Activated CD4-positive, alpha-beta T cell treated with anti-CD3 and anti-CD28 coated beads for 36 hours (primary cell): ENCODE measurements at regions of chr16 and their contacts with region 1.

Region 1: DNA sequence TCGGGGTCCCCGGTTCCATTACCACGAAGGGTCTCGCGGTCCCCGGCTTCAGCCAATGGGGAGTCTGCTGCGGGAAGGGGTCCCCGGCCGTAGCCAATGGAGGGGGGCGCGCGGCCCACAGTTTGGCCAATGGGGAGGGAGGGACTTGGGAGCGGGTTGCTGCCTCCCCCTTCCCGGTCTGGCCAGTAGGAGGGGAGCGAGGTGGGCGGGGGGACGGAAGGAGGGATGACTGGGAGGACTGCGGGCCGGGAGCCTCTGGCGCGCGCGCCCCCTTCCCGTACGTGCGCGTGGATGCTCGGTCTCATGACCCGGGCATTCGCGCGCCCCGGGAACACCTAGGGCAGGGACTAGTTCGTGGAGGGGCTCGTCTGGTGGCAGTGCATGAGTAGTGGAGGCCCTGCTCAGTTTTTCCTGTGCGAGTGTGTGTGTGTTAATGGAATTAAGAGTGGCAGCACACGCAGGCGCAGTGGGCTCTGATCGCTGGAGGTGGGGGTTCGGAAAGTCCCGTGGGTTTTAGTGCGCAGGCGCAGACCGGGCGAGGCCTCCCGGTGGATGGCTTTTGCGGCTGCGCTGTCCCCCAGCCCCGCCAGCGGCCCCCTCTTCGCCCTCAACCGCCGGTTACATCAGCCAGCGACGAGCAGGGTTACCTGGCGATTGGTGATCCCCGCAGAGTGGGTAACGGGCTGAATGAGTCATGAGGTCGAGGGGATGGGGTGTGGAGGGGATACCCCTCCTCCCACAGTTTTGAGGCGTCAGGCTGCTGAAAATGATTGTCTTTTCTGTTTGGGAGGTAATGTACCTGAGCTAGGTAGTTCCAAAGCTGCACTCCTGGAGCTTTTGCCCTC is 1.3 kb downstream of the ATXN2L start:
- DNase-seq: peak; percentile 98
- ATAC-seq: peak; percentile 80
- H3K4me3 Mint-ChIP-seq: peak overlapping the region; percentile 96
- H3K27ac Mint-ChIP-seq: peak overlapping the region; percentile 100
- H3K4me1 Mint-ChIP-seq: peaks cover 45% of the 10 kb centered on the region
- H3K27me3 Mint-ChIP-seq: no peaks in the 10 kb centered on the region

Region 2: DNA sequence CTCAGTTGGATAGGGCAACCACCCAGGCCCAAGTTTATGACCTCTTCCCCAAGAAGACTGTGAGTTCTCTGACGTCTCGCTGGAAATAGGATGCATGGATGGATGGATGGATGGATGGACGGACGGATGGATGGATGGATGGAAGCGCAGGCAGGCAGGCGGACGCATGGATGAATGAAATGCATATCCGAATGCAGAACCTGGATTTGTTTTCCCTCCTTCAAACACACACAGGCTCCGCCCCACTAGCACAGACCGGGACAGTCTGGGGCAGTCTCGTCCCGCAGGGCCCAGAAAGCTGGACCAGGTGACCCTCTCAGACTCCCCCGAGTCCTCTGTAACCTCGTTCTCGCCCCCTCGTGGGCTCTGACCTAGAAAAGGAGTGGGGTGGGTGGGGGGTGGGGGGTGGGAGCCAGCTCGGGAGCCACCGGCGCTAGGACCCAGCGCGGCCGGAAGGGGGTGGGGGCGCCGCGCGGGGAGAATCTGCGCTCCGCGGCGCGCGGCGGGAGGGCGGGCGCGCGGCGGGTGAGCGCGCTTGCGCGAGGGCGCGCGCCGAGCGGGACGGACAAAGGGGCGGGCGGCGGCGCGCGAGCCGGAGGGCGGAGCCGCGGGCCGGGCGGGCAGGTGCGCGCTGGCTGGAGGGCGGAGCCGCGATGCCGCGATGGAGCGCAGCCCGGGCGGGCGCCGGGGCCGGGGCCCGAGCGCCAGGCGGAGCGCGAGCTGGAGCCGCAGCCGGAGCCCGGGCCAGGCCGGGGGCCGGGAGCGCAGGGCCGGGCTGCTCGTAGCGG is 532.0 kb before region 1 on chr16 and contains the start of gene SBK1:
- CTCF ChIA-PET with region 1: no interaction called
- POLR2A ChIA-PET with region 1: no interaction called
- intact Hi-C with region 1: loop called in 1 of 2 experiments (anchors 1 kb)
- DNase-seq: peak; percentile 91
- ATAC-seq: peak; percentile 94
- H3K4me3 Mint-ChIP-seq: peak within 1 kb of the TSS; percentile 84
- H3K27ac Mint-ChIP-seq: peak within 1 kb of the TSS; percentile 93
- H3K4me1 Mint-ChIP-seq: peaks cover 51% of the 10 kb centered on the region
- H3K27me3 Mint-ChIP-seq: no peaks in the 10 kb centered on the region
- total RNA-seq, gene SBK1: 6.5 to 6.6 TPM

Region 3: DNA sequence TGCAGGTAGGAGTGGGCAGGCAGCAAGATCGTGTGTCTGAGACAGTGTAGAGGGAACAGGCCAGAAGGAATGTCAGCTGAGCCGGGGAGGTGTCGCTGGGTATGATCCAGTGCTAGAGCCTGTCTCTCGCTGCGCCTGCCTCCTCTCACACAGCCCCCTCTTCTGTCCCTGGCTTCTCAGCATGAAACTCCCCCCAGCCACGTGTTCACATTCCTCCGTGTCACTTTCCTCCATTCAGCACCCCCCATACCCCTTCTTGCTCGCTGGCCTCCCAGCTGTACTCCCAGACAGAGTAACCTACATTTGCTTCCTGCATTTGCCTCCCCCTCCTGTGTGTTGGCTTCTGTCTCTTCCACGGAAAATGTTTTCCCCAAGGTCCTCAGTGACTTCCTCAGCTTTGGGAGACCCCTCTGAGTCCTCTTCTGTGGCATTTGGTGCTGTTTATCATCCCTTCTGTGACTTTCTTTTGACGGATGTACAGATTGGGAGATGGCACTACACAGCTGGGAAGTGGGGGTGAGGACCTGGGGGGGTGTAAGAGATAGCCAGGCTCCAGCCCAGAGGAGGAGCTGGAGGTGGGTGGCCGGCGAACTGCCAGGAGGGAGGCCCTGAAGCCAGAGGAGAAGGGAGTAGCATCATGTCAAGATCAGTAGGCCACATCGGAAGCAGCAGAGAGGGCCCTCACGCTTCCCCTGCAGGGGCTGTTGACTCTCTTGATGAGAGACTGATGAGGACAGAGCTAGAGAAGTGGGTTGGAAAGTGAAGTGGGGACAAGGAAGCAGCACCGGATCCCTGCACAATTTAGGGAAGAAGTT is 251.2 kb before region 1 on chr16:
- CTCF ChIA-PET with region 1: no interaction called
- POLR2A ChIA-PET with region 1: no interaction called
- intact Hi-C with region 1: no loop called
- DNase-seq: no peak
- ATAC-seq: no peak
- H3K4me3 Mint-ChIP-seq: no peak overlapping the region
- H3K27ac Mint-ChIP-seq: peak overlapping the region; percentile 8
- H3K4me1 Mint-ChIP-seq: peaks cover 18% of the 10 kb centered on the region
- H3K27me3 Mint-ChIP-seq: no peaks in the 10 kb centered on the region

Region 4: GRCh38 chr16:28846080-28846932 is 22.2 kb after region 1 on chr16 and contains the start of gene TUFM:
- CTCF ChIA-PET with region 1: interaction called, 4 read pairs
- POLR2A ChIA-PET with region 1: interaction called, 33 read pairs
- intact Hi-C with region 1: loop called (anchors 1 kb)
- DNase-seq: peak; percentile 99
- ATAC-seq: peak; percentile 94
- H3K4me3 Mint-ChIP-seq: peak within 1 kb of the TSS; percentile 97
- H3K27ac Mint-ChIP-seq: peak within 1 kb of the TSS; percentile 97
- H3K4me1 Mint-ChIP-seq: peaks cover 23% of the 10 kb centered on the region
- H3K27me3 Mint-ChIP-seq: no peaks in the 10 kb centered on the region
- total RNA-seq, gene TUFM: 224 to 241 TPM

Region 5: GRCh38 chr16:28935924-28936783 is 112.1 kb after region 1 on chr16:
- CTCF ChIA-PET with region 1: no interaction called
- POLR2A ChIA-PET with region 1: no interaction called
- intact Hi-C with region 1: loop called in 1 of 2 experiments (anchors 1 kb)
- DNase-seq: peak; percentile 95
- ATAC-seq: peak; percentile 100
- H3K4me3 Mint-ChIP-seq: peak overlapping the region; percentile 71
- H3K27ac Mint-ChIP-seq: peak overlapping the region; percentile 83
- H3K4me1 Mint-ChIP-seq: peaks cover 14% of the 10 kb centered on the region
- H3K27me3 Mint-ChIP-seq: no peaks in the 10 kb centered on the region

Region 6: GRCh38 chr16:29805378-29806098 is 981.4 kb after region 1 on chr16:
- CTCF ChIA-PET with region 1: no interaction called
- POLR2A ChIA-PET with region 1: no interaction called
- intact Hi-C with region 1: loop called in 1 of 2 experiments (anchors 1 kb)
- DNase-seq: peak; percentile 99
- ATAC-seq: peak; percentile 64
- H3K4me3 Mint-ChIP-seq: peak overlapping the region; percentile 99
- H3K27ac Mint-ChIP-seq: peak overlapping the region; percentile 100
- H3K4me1 Mint-ChIP-seq: peaks cover 37% of the 10 kb centered on the region
- H3K27me3 Mint-ChIP-seq: no peaks in the 10 kb centered on the region

Region 7: GRCh38 chr16:30065143-30065850 is 1241.2 kb after region 1 on chr16 and contains the start of gene ALDOA:
- CTCF ChIA-PET with region 1: no interaction called
- POLR2A ChIA-PET with region 1: no interaction called
- intact Hi-C with region 1: loop called in 1 of 2 experiments (anchors 1 kb)
- DNase-seq: peak; percentile 99
- ATAC-seq: peak; percentile 87
- H3K4me3 Mint-ChIP-seq: peak within 1 kb of the TSS; percentile 88
- H3K27ac Mint-ChIP-seq: peak within 1 kb of the TSS; percentile 99
- H3K4me1 Mint-ChIP-seq: peaks cover 31% of the 10 kb centered on the region
- H3K27me3 Mint-ChIP-seq: no peaks in the 10 kb centered on the region
- total RNA-seq, gene ALDOA: 2,482 to 3,644 TPM